ENCODE measurements at regions of chr16 and their contacts with region 1.

Region 1: DNA sequence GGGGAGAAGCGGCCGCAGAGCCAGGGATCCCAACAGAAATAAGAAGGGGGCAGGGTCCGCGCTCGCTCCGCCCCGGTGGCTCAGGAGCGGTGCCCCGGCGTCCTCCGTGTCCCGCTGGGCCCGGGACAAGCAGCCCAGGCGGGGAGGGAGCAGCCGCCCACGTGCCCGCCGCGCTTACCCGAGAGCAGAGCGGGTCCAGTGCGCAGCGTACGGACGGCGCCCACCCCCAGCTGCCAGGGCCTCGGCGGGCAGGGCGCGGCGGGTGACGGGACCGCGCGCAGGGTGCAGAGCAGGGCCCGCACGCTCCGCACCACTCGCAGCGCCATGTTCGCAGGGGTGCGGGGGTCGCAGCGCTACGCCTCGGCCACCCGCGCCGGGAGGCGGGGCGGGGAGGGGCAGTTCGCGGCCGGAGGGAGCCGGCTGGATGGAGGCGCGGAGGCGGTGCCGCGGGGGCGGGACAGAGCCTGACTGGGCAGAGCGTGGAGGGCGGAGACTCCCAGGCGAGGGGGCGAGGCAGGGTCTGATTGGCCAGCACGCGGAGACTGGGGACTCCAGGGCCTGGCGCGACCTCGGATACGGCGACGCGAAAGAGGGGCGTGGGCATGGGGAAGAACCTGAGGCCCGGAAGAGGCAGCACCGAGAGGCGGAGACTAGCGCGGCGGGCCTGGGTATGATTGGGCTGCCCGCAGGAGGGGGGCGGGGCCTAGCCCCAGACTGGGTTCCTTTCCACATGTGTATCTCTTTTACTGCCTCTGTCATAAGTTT is at the start of gene GCSH:
- DNase-seq: peak; percentile 99
- H3K4me3 ChIP-seq: peak within 1 kb of the TSS; percentile 52 to 90 (median 79)
- H3K27ac ChIP-seq: peak within 1 kb of the TSS; percentile 83 to 87 (median 84)
- H3K4me1 ChIP-seq: peaks cover 0 to 12% (median 2%) of the 10 kb centered on the region in 4 donors
- H3K27me3 ChIP-seq: no peaks in the 10 kb centered on the region
- CTCF ChIP-seq: no peak
- EP300 ChIP-seq: no peak
- POLR2A ChIP-seq: no peak
- total RNA-seq, gene GCSH: 18.3 to 27.8 (median 23.6) TPM

Region 2: GRCh38 chr16:81077076-81077940 is 18.8 kb before region 1 on chr16 and contains the start of gene C16orf46:
- intact Hi-C with region 1: loop called (anchors 1 kb)
- DNase-seq: peak; percentile 99
- H3K4me3 ChIP-seq: peak within 1 kb of the TSS; percentile 51 to 79 (median 70)
- H3K27ac ChIP-seq: peak within 1 kb of the TSS; percentile 90 to 97 (median 96)
- H3K4me1 ChIP-seq: peaks cover 0 to 5% (median 2%) of the 10 kb centered on the region in 4 donors
- H3K27me3 ChIP-seq: no peaks in the 10 kb centered on the region
- CTCF ChIP-seq: no peak
- EP300 ChIP-seq: peak in 2 of 4 donors; percentile 3 to 4
- POLR2A ChIP-seq: peak; percentile 80 to 86
- total RNA-seq, gene C16orf46: 0.27 to 1.1 TPM in 2 of 4 donors, not detected in the others

Region 3: DNA sequence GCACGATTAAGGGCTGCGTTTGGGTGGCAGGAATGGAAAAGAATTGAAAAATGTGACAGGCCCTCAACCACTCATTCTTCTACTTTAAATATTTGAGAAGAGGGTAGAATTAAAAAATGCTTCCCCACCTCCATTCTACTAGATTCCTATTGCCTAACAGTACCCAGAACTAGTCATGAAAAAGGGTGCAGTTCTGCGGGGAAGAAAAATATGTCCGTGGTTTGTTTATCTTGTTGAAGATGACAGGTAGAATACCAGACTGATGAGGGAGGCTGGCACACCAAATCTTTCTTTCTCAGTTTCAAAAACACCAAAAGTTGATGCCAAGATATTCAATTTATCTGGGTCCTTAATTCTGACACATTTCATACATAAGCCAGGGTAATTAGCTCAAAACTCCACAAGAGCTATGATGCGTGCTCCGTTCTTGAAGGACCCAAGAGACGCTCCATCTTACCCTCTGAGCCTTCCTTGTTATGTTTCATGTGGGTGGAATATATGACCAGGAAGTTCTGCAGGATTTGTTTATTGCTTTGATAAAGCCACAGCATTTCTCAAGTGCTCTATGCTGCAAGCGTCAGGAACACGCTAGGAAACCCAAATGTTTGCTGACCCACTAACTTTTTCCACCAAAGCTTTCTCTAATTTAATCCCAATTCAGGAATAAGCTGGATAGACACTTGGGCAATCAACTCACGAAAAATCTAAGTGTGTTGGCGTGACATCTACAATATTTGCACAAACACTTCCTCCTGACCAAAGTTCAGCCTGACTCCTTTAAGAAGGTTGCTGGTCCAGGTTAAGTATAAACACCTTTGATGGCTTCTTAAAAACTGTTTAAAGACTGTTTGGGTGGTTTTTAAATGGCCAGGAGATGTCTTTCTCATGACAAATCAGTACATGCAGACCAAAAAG is 198.0 kb after region 1 on chr16:
- intact Hi-C with region 1: no loop called
- DNase-seq: no peak
- H3K4me3 ChIP-seq: no peak overlapping the region
- H3K27ac ChIP-seq: no peak overlapping the region
- H3K4me1 ChIP-seq: no peaks in the 10 kb centered on the region
- H3K27me3 ChIP-seq: no peaks in the 10 kb centered on the region
- CTCF ChIP-seq: no peak
- EP300 ChIP-seq: no peak
- POLR2A ChIP-seq: no peak